Natural killer cell (primary cell): ENCODE measurements at regions of chr10 and their contacts with region 1.

Region 1: GRCh38 chr10:130110246-130111112 is at the start of gene C10orf143:
- DNase-seq: peak; percentile 97 to 99
- ATAC-seq: peak; percentile 81 to 94 (median 83)
- H3K4me3 ChIP-seq: peak within 1 kb of the TSS; percentile 76
- H3K4me3 Mint-ChIP-seq: peak within 1 kb of the TSS; percentile 93
- H3K27ac ChIP-seq: peak within 1 kb of the TSS; percentile 91
- H3K27ac Mint-ChIP-seq: peak within 1 kb of the TSS; percentile 96 to 97
- H3K4me1 ChIP-seq: peaks cover 24% of the 10 kb centered on the region
- H3K4me1 Mint-ChIP-seq: peaks cover 28 to 35% of the 10 kb centered on the region in 2 donors
- H3K27me3 ChIP-seq: no peaks in the 10 kb centered on the region
- H3K27me3 Mint-ChIP-seq: no peaks in the 10 kb centered on the region
- CTCF ChIP-seq: no peak
- total RNA-seq, gene C10orf143: 7.1 to 10.9 (median 8.2) TPM

Region 2: DNA sequence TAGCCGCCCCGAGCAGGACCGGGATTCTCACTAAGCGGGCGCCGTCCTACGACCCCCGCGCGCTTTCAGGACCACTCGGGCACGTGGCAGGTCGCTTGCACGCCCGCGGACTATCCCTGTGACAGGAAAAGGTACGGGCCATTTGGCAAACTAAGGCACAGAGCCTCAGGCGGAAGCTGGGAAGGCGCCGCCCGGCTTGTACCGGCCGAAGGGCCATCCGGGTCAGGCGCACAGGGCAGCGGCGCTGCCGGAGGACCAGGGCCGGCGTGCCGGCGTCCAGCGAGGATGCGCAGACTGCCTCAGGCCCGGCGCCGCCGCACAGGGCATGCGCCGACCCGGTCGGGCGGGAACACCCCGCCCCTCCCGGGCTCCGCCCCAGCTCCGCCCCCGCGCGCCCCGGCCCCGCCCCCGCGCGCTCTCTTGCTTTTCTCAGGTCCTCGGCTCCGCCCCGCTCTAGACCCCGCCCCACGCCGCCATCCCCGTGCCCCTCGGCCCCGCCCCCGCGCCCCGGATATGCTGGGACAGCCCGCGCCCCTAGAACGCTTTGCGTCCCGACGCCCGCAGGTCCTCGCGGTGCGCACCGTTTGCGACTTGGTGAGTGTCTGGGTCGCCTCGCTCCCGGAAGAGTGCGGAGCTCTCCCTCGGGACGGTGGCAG is 643.6 kb before region 1 on chr10 and contains the start of gene MGMT:
- intact Hi-C with region 1: loop called (anchors 2 kb)
- DNase-seq: peak; percentile 96 to 97
- ATAC-seq: peak; percentile 98 to 99 (median 99)
- H3K4me3 ChIP-seq: peak within 1 kb of the TSS; percentile 81
- H3K4me3 Mint-ChIP-seq: peak within 1 kb of the TSS; percentile 88
- H3K27ac ChIP-seq: peak within 1 kb of the TSS; percentile 74
- H3K27ac Mint-ChIP-seq: peak within 1 kb of the TSS; percentile 50 to 81
- H3K4me1 ChIP-seq: peaks cover 20% of the 10 kb centered on the region
- H3K4me1 Mint-ChIP-seq: peaks cover 14 to 17% of the 10 kb centered on the region in 2 donors
- H3K27me3 ChIP-seq: no peaks in the 10 kb centered on the region
- H3K27me3 Mint-ChIP-seq: no peaks in the 10 kb centered on the region
- CTCF ChIP-seq: no peak
- total RNA-seq, gene MGMT: 16.5 to 19.7 (median 18.8) TPM

Region 3: DNA sequence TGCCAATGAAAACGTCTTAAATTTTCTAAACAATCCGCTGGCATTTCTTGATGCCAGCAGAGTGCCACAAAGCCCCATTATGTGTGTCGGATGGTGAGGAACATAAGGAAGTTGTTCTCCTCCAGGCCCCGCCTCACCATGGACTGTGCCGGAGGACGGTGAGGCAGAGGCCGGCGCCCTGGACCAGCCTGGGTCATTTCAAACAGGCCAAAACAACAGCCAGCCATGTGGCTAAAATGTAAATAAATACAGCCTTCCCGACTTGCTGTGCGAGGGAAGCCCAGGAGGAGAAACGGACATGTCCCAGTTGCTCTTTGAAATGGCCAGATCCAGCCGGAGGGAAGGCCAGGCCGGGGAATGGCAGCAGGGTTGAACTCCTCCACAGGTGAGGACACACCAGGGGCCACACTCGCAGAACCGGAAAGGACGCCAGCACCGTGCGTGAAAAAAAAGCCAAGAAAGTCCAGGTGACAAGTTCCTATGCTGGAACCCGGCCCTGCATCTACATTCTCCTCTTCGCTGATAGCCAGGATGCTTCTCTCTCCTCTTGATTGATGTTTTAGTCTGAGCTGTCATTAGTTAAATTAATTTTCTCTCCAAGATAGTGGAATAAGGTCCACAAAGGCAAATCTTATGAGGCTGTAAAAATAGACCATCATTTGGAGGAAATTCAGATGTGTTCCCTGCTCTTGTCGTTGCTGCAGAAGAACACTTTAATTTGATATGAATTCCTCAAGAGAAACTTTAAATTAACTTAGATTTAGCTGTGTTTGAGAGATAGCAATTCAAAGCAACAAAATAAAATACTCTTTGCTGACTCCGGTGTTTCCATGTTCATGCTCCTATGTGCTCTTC is 211.0 kb before region 1 on chr10:
- intact Hi-C with region 1: loop called (anchors 10 kb)
- DNase-seq: no peak
- ATAC-seq: no peak
- H3K4me3 ChIP-seq: no peak overlapping the region
- H3K4me3 Mint-ChIP-seq: no peak overlapping the region
- H3K27ac ChIP-seq: no peak overlapping the region
- H3K27ac Mint-ChIP-seq: no peak overlapping the region
- H3K4me1 ChIP-seq: no peaks in the 10 kb centered on the region
- H3K4me1 Mint-ChIP-seq: no peaks in the 10 kb centered on the region
- H3K27me3 ChIP-seq: no peaks in the 10 kb centered on the region
- H3K27me3 Mint-ChIP-seq: peaks cover 14 to 54% of the 10 kb centered on the region in 2 donors
- CTCF ChIP-seq: no peak

Region 4: DNA sequence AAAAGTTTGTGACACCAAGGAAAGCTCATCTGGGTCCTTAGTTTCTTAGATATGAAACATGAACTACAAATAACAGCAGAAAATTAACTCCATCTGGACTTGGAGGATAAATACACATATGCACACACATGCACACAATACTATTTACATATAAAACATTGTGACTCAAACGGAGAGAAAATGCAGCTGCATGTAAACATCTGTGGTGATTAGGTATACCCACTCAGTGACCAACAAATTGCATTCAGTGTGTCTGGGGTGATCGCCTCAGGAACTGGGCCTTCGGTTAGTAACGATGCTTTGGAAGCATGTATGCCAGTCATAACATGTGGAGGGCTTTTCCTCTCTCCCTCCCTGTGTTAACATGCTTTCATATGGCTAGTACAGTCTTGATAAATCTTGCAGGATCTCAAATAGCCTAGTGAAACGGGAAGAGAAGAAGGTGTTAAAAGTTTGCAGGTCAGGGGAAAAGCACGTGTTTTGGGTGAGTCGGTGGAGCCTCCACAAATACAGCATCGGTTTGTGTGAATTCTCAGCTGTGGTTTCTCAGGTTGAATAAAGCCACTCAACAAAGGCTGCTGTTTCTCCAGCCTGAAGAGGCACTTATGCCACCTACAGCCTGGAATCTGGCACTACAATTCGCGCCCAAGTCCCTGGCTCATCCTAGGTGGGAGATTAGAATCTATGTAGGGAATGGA is 17.0 kb after region 1 on chr10:
- intact Hi-C with region 1: loop called (anchors 1 kb)
- DNase-seq: peak; percentile 33 to 80
- ATAC-seq: peak; percentile 87 to 98 (median 97)
- H3K4me3 ChIP-seq: no peak overlapping the region
- H3K4me3 Mint-ChIP-seq: no peak overlapping the region
- H3K27ac ChIP-seq: no peak overlapping the region
- H3K27ac Mint-ChIP-seq: peak overlapping the region in 1 of 2 donors; percentile 8
- H3K4me1 ChIP-seq: peaks cover 5% of the 10 kb centered on the region
- H3K4me1 Mint-ChIP-seq: peaks cover 12 to 14% of the 10 kb centered on the region in 2 donors
- H3K27me3 ChIP-seq: peaks cover 3% of the 10 kb centered on the region
- H3K27me3 Mint-ChIP-seq: peaks cover 7 to 11% of the 10 kb centered on the region in 2 donors
- CTCF ChIP-seq: peak; percentile 77

Region 5: GRCh38 chr10:130136226-130137089 is 26.0 kb after region 1 on chr10 and contains the start of gene GLRX3:
- intact Hi-C with region 1: loop called (anchors 1 kb)
- DNase-seq: peak; percentile 90 to 94
- ATAC-seq: peak; percentile 96 to 98 (median 98)
- H3K4me3 ChIP-seq: peak within 1 kb of the TSS; percentile 59
- H3K4me3 Mint-ChIP-seq: peak within 1 kb of the TSS; percentile 97
- H3K27ac ChIP-seq: peak within 1 kb of the TSS; percentile 66
- H3K27ac Mint-ChIP-seq: peak within 1 kb of the TSS; percentile 60 to 86
- H3K4me1 ChIP-seq: peaks cover 30% of the 10 kb centered on the region
- H3K4me1 Mint-ChIP-seq: peaks cover 21 to 25% of the 10 kb centered on the region in 2 donors
- H3K27me3 ChIP-seq: no peaks in the 10 kb centered on the region
- H3K27me3 Mint-ChIP-seq: peaks cover 5 to 7% of the 10 kb centered on the region in 2 donors
- CTCF ChIP-seq: no peak
- total RNA-seq, gene GLRX3: 33.8 to 51.7 (median 39.1) TPM